ENCODE measurements at regions of chr6 and their contacts with region 1.

Region 1: GRCh38 chr6:131400054-131400781 is 172.8 kb upstream of the ARG1 start:
- DNase-seq: no peak
- ATAC-seq: no peak
- H3K4me3 Mint-ChIP-seq: no peak overlapping the region
- H3K27ac Mint-ChIP-seq: no peak overlapping the region
- H3K4me1 Mint-ChIP-seq: peaks cover 5% of the 10 kb centered on the region
- H3K27me3 Mint-ChIP-seq: no peaks in the 10 kb centered on the region
- CTCF ChIP-seq: no peak

Region 2: GRCh38 chr6:131321589-131321988 is 78.6 kb before region 1 on chr6:
- CTCF ChIA-PET with region 1: no interaction called
- POLR2A ChIA-PET with region 1: no interaction called
- intact Hi-C with region 1: no loop called
- DNase-seq: no peak
- ATAC-seq: no peak
- H3K4me3 Mint-ChIP-seq: no peak overlapping the region
- H3K27ac Mint-ChIP-seq: no peak overlapping the region
- H3K4me1 Mint-ChIP-seq: no peaks in the 10 kb centered on the region
- H3K27me3 Mint-ChIP-seq: no peaks in the 10 kb centered on the region
- CTCF ChIP-seq: no peak

Region 3: DNA sequence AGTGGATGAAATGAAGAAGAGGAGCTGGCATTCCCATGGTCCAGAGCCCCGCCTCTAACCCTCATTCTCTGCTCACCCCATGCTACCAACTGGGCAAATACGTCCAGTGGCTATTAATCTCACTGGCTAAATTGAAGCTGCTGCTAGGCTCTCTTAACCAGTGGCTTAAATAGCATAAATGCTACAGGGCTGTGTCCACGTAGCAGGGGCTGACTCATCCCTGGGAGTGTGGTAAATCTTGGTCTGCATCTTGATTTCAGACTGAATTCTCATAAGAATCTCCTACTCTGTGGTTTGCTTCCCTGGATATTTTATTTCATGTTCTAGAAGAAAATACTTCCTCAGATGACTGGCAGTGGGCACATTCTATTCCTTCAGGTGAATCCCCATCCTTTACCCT is 20.3 kb before region 1 on chr6:
- CTCF ChIA-PET with region 1: no interaction called
- POLR2A ChIA-PET with region 1: no interaction called
- intact Hi-C with region 1: loop called (anchors 1 kb)
- DNase-seq: no peak
- ATAC-seq: no peak
- H3K4me3 Mint-ChIP-seq: no peak overlapping the region
- H3K27ac Mint-ChIP-seq: no peak overlapping the region
- H3K4me1 Mint-ChIP-seq: peaks cover 20% of the 10 kb centered on the region
- H3K27me3 Mint-ChIP-seq: peaks cover 3% of the 10 kb centered on the region
- CTCF ChIP-seq: no peak